ENCODE measurements at regions of chr1 and their contacts with region 1.

Region 1: GRCh38 chr1:161864577-161864976 is 98.5 kb downstream of the ATF6 start:
- DNase-seq: peak in 1 of 2 experiments; percentile 15
- H3K4me3 ChIP-seq: no peak overlapping the region
- H3K4me3 Mint-ChIP-seq: no peak overlapping the region
- H3K27ac Mint-ChIP-seq: no peak overlapping the region
- H3K4me1 ChIP-seq: peaks cover 9% of the 10 kb centered on the region
- H3K4me1 Mint-ChIP-seq: peaks cover 7% of the 10 kb centered on the region
- H3K27me3 ChIP-seq: no peaks in the 10 kb centered on the region
- H3K27me3 Mint-ChIP-seq: no peaks in the 10 kb centered on the region
- CTCF ChIP-seq: peak; percentile 22 to 60

Region 2: GRCh38 chr1:161801955-161802354 is 62.6 kb before region 1 on chr1:
- CTCF ChIA-PET with region 1: no interaction called
- POLR2A ChIA-PET with region 1: no interaction called
- intact Hi-C with region 1: loop called (anchors 10 kb)
- DNase-seq: no peak
- H3K4me3 ChIP-seq: no peak overlapping the region
- H3K4me3 Mint-ChIP-seq: no peak overlapping the region
- H3K27ac Mint-ChIP-seq: no peak overlapping the region
- H3K4me1 ChIP-seq: no peaks in the 10 kb centered on the region
- H3K4me1 Mint-ChIP-seq: no peaks in the 10 kb centered on the region
- H3K27me3 ChIP-seq: no peaks in the 10 kb centered on the region
- H3K27me3 Mint-ChIP-seq: no peaks in the 10 kb centered on the region
- CTCF ChIP-seq: no peak

Region 3: DNA sequence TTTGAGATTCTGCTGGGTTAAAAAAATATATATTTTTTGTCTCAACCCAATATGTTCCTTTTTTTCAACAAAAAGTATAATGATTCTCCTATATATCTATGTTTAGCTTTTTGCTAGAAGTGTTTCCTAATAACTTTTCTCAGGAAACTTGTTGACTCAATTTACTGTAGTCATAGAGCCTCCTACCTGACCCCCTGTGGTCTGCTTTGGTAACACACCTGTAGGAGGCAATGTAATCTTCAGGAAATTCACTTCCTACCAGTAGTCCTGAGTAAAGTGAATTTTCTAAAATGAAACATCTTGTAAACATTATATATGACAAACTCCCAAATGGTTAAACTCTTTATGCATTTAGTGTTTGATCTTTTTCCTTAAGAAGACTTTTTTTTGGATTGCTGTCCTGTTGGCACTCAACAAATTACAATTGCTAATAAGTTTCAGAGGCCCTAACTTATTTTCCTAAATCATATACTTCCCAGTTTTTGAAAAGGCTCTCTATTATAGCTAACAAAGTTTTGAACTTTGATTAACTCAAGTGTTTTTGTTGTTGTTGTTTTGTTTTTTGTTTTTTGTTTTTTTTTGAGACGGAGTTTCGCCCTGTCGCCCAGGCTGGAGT is 40.8 kb after region 1 on chr1:
- CTCF ChIA-PET with region 1: no interaction called
- POLR2A ChIA-PET with region 1: no interaction called
- intact Hi-C with region 1: loop called (anchors 5 kb)
- DNase-seq: peak; percentile 44 to 55
- H3K4me3 ChIP-seq: no peak overlapping the region
- H3K4me3 Mint-ChIP-seq: no peak overlapping the region
- H3K27ac Mint-ChIP-seq: no peak overlapping the region
- H3K4me1 ChIP-seq: peaks cover 8% of the 10 kb centered on the region
- H3K4me1 Mint-ChIP-seq: peaks cover 7% of the 10 kb centered on the region
- H3K27me3 ChIP-seq: no peaks in the 10 kb centered on the region
- H3K27me3 Mint-ChIP-seq: no peaks in the 10 kb centered on the region
- CTCF ChIP-seq: peak; percentile 45 to 87

Region 4: GRCh38 chr1:162023547-162024501 is 159.2 kb after region 1 on chr1 and contains the start of gene OLFML2B:
- CTCF ChIA-PET with region 1: interaction called, 7 read pairs
- POLR2A ChIA-PET with region 1: no interaction called
- intact Hi-C with region 1: loop called (anchors 5 kb)
- DNase-seq: peak; percentile 54 to 69
- H3K4me3 ChIP-seq: peak within 1 kb of the TSS; percentile 55
- H3K4me3 Mint-ChIP-seq: peak within 1 kb of the TSS; percentile 78
- H3K27ac Mint-ChIP-seq: no peak within 1 kb of the TSS
- H3K4me1 ChIP-seq: no peaks in the 10 kb centered on the region; the same call in 1 of the 2 replicates
- H3K4me1 Mint-ChIP-seq: no peaks in the 10 kb centered on the region
- H3K27me3 ChIP-seq: peaks cover 1% of the 10 kb centered on the region; the same call in 1 of the 2 replicates
- H3K27me3 Mint-ChIP-seq: peaks cover 6% of the 10 kb centered on the region
- CTCF ChIP-seq: no peak
- total RNA-seq, gene OLFML2B: 0.43 and 0.56 TPM in 2 replicates